A549 (cell line): ENCODE measurements at regions of chr17 and their contacts with region 1.

Region 1: GRCh38 chr17:48724251-48725003 is 1.4 kb downstream of the PRAC2 start:
- DNase-seq: peak; percentile 68 to 77
- ATAC-seq: peak; percentile 67 to 85
- H3K4me3 ChIP-seq: no peak overlapping the region
- H3K27ac ChIP-seq: 0 out of 6 replicates have a peak overlapping the region, but pooled peaks of 1 of the 2 experiments have one; percentile 13
- H3K4me1 ChIP-seq: peaks cover 13% of the 10 kb centered on the region
- CTCF ChIP-seq: peak; percentile 94
- EP300 ChIP-seq: no peak
- POLR2A ChIP-seq: no peak
- RAD21 ChIP-seq: peak; percentile 98 to 99

Region 2: DNA sequence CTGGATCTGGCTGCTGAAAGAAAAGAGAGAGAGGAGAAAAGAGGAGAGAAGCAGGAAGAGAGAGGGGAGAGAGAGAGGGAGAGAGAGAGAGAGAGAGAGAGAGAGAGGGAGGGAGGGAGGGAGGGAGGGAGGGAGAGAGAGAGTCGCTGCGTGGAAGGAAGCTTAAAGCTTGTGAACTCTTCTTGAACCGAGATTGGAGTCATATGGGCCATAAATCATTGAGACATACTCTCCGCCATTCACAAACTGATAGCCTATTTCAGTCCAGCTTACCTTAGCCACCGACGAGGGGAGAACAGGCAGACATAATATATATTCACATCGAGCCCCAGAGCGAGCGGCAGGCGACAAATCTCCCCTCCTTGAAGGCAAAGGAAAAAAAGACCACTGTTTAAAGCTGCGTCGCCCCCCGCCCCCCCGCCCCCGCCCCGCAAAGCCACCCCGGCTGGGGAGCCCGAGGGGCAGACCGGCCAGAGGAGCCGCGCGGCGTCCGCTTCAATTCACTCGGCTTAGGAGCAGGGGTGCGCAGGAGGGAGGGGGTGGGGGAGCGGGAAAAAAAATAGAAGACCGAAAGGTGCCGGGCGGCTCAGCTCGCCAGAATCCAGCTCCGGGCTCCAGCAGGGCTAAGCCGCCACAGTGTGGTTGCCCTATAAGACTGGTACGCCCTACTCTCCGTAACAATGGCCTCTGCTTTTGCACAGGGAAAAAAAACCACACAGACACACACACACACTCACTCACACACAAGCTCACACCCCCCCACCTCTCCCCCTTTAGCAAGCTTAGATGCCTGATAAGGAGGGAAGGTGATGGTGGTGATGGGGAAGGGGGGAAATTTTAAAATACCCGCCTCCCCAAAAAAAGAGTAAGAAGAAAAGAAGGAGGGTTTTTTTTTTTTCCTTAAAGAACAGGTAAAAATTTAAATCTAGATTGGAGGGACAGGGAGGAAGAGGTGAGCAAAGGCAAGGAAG is 168.9 kb before region 1 on chr17:
- CTCF ChIA-PET with region 1: no interaction called
- POLR2A ChIA-PET with region 1: no interaction called
- DNase-seq: peak; percentile 83 to 93
- ATAC-seq: peak; percentile 72 to 75
- H3K4me3 ChIP-seq: peak overlapping the region; percentile 60
- H3K27ac ChIP-seq: peak overlapping the region; percentile 97
- H3K4me1 ChIP-seq: peaks cover 31% of the 10 kb centered on the region
- CTCF ChIP-seq: no peak
- EP300 ChIP-seq: no peak
- POLR2A ChIP-seq: no peak; the same call in 1 of the 2 replicates
- RAD21 ChIP-seq: no peak; a peak in 1 of 5 replicates

Region 3: DNA sequence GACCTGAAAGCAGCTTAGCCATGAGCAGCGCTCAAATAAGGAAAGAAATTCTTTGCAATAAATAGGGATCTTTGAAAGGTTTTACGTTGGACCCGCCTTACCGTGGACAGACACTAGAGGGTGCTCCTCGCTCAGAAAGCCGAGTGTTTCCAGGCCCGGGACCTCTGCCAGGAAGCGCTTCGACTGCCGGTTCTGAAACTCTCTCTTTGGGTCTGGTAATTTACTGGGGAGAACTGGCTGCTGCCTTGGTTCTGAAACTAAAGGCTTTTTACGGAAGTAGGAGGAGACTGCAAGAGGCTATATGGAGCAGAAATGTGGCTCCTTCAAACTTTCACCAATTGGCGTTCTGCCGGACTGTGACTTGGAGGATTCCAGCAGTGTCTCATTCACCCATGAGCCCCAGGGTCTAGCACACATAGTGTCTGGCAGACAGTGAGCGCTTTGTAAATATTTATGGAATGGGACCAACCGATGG is 52.7 kb before region 1 on chr17:
- CTCF ChIA-PET with region 1: interaction called, 204 read pairs
- POLR2A ChIA-PET with region 1: no interaction called
- DNase-seq: peak; percentile 72 to 79
- ATAC-seq: peak; percentile 81 to 86
- H3K4me3 ChIP-seq: peak overlapping the region; percentile 10; the same call in 2 of the 3 replicates
- H3K27ac ChIP-seq: peak overlapping the region; percentile 29 to 69
- H3K4me1 ChIP-seq: peaks cover 3% of the 10 kb centered on the region; the same call in 1 of the 3 replicates
- CTCF ChIP-seq: peak; percentile 91
- EP300 ChIP-seq: no peak
- POLR2A ChIP-seq: no peak
- RAD21 ChIP-seq: peak; percentile 90 to 93

Region 4: GRCh38 chr17:48747445-48748363 is 23.3 kb after region 1 on chr17:
- CTCF ChIA-PET with region 1: interaction called, 51 read pairs
- POLR2A ChIA-PET with region 1: no interaction called
- DNase-seq: no peak
- ATAC-seq: no peak
- H3K4me3 ChIP-seq: no peak overlapping the region
- H3K27ac ChIP-seq: no peak overlapping the region
- H3K4me1 ChIP-seq: peaks cover 17% of the 10 kb centered on the region; the same call in 2 of the 3 replicates
- CTCF ChIP-seq: no peak
- EP300 ChIP-seq: no peak
- POLR2A ChIP-seq: no peak
- RAD21 ChIP-seq: no peak

Region 5: GRCh38 chr17:48779421-48779820 is 55.0 kb after region 1 on chr17:
- CTCF ChIA-PET with region 1: interaction called, 852 read pairs
- POLR2A ChIA-PET with region 1: no interaction called
- DNase-seq: no peak
- ATAC-seq: no peak
- H3K4me3 ChIP-seq: no peak overlapping the region
- H3K27ac ChIP-seq: no peak overlapping the region
- H3K4me1 ChIP-seq: no peaks in the 10 kb centered on the region
- CTCF ChIP-seq: no peak
- EP300 ChIP-seq: no peak
- POLR2A ChIP-seq: no peak
- RAD21 ChIP-seq: no peak

Region 6: GRCh38 chr17:48816774-48817590 is 92.6 kb after region 1 on chr17 and contains the start of gene TTLL6:
- CTCF ChIA-PET with region 1: interaction called, 302 read pairs
- POLR2A ChIA-PET with region 1: no interaction called
- DNase-seq: peak; percentile 90 to 97
- ATAC-seq: peak; percentile 95 to 97
- H3K4me3 ChIP-seq: peak within 1 kb of the TSS; percentile 54
- H3K27ac ChIP-seq: peak within 1 kb of the TSS; percentile 56 to 76
- H3K4me1 ChIP-seq: peaks cover 23% of the 10 kb centered on the region; the same call in 2 of the 3 replicates
- CTCF ChIP-seq: no peak
- EP300 ChIP-seq: no peak
- POLR2A ChIP-seq: no peak; the same call in 1 of the 2 replicates
- RAD21 ChIP-seq: no peak
- polyA plus RNA-seq, gene TTLL6: 7.8 and 8.9 TPM in 2 replicates

Region 7: DNA sequence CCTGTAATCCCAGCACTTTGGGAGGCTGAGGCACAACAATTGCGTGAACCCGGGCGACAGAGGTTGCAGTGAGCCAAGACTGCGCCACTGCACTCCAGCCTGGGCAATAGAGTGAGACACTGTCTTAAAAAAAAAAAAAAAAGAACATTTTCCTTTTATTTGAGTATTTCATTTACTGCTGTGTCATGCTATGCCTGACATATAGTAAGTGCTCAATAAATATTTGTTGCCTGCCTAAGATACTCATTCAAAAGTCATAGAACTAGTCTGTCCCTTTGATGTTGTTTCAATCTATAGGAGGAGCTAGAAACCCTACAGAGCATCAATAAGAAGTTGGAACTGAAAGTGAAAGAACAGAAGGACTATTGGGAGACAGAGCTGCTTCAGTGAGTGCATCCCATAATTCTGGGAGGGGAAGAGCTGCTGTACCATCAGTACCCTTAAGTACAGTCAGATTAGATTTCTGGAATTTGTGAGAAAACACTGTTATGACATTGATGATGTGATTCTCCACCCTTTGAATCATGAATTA is 126.4 kb after region 1 on chr17:
- CTCF ChIA-PET with region 1: interaction called, 11 read pairs
- POLR2A ChIA-PET with region 1: no interaction called
- DNase-seq: no peak
- ATAC-seq: no peak
- H3K4me3 ChIP-seq: no peak overlapping the region
- H3K27ac ChIP-seq: peak overlapping the region in 1 of 2 experiments; percentile 25; a peak in 1 of 6 replicates
- H3K4me1 ChIP-seq: 0 out of 3 replicates have a peak, but pooled peaks cover 5% of the 10 kb centered on the region
- CTCF ChIP-seq: no peak
- EP300 ChIP-seq: no peak
- POLR2A ChIP-seq: no peak
- RAD21 ChIP-seq: no peak

Region 8: DNA sequence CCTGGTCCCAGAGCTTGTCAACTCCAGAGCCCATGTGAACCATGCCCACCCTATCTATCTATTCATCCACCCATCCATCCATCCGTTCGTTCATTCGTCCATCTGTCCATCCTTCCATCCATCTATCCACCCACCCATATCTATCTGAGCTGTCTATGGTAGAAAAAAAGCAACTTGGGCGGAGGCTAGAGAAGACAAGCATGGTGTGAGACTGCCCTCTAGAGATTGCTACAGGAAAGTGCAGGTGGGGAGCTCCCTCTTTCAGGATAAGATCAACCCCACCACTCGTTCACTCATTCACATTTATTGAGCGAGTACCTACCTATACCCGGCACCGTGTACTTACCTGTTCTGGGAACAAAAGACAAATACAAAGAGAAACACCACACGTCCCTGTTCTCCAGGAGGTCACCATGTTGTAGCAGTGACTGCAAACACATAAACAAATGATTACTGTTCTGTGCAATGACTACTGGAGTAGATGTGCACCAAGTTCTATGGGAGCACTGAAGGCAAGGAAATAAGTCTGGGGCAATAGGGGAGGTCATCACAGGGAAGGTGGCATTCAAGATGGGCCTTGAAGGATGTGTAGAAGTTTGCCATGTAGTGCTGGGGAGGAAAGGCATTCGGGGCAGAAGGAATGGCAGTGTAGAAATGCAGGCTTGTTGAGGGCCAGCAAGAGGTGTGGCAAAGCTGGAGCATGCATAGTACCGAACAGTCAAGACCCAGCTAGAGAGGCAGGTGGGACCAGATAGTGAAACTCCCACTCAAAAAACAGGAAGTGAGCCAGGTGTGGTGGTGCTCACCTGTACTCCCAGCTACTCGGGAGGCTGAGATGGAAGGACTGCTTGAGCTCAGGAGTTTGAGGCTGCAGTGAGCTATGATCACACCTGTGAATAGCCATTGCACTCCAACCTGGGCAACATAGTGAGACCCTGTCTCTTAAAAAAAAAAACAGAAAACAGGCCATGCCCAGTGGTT is 154.8 kb after region 1 on chr17:
- CTCF ChIA-PET with region 1: interaction called, 620 read pairs
- POLR2A ChIA-PET with region 1: interaction called, 3 read pairs
- DNase-seq: peak; percentile 85 to 94
- ATAC-seq: peak; percentile 86 to 88
- H3K4me3 ChIP-seq: no peak overlapping the region
- H3K27ac ChIP-seq: no peak overlapping the region
- H3K4me1 ChIP-seq: peaks cover 15% of the 10 kb centered on the region
- CTCF ChIP-seq: peak; percentile 99
- EP300 ChIP-seq: no peak
- POLR2A ChIP-seq: no peak
- RAD21 ChIP-seq: peak; percentile 99 to 100